BJ (cell line): ENCODE measurements at regions of chr19 and their contacts with region 1.

Region 1: DNA sequence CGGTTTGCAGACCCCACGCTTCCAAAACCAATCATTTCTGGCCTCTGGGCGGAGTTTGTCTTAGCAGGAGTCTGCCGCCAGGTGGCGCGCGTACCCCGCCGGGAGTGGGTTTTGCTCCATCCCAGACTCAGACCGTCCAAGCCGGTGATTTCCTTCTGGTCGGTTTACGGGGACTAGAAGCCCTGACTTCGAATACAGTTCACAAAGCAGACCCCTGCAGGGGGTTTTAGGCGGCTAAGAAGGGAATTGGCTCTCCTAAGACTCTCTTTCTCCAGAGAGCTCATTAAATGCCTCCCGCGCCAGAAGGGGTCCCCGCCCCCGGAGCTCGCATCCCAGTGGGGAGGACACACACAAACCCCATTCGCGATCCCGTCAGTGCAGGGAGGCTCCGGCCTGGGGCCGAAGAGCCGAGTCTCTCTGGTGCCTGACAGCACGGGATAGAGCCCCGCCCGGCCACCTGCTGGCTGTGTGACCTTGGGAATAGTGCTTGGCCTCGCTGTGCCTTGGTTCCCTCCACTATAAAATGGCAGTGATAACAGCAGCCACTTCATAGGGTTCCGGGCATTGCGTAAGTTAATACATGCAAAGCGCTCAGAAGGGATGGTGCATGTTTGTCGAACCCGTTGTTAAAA is 8.6 kb upstream of the NUP62 start:
- DNase-seq: no peak
- H3K4me3 ChIP-seq: 0 out of 2 replicates have a peak overlapping the region, but pooled peaks have one; percentile 10
- H3K27me3 ChIP-seq: peaks cover under 1% of the 10 kb centered on the region; the same call in 1 of the 2 replicates
- CTCF ChIP-seq: peak; percentile 96

Region 2: GRCh38 chr19:49954079-49954829 is 16.4 kb after region 1 on chr19:
- CTCF ChIA-PET with region 1: interaction called, 22 read pairs
- POLR2A ChIA-PET with region 1: no interaction called
- DNase-seq: no peak
- H3K4me3 ChIP-seq: no peak overlapping the region
- H3K27me3 ChIP-seq: peaks cover 8% of the 10 kb centered on the region
- CTCF ChIP-seq: no peak

Region 3: DNA sequence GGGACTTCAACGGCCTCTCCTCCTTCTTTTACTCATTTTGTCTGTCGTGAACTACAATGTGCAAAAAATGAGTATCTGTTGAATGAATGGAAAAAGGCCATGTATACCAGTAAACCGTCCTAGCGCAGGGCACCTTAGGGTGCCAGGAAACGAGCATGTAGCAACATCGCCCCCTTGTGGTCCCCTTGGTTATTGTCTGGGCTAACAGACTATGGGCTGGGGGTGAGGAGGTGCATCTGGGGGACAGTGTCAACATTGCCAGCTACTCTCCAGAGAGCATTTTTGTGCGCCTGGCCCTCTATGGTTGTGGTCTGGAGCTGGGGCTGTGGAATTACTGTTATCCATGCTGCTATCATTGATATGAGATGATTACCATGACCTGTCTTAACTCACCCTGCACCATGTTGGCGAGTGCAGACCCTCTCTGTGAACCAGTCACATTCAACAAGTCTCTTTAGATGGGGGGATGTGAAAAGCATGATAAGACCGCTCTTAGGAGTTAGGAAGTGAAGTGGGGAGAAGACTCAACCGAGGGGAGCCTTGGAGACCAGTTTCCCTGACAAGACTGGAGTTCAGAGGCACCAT is 45.9 kb after region 1 on chr19:
- CTCF ChIA-PET with region 1: interaction called, 10 read pairs
- POLR2A ChIA-PET with region 1: no interaction called
- DNase-seq: no peak
- H3K4me3 ChIP-seq: no peak overlapping the region
- H3K27me3 ChIP-seq: no peaks in the 10 kb centered on the region
- CTCF ChIP-seq: peak; percentile 82